ENCODE measurements at regions of chr2 and their contacts with region 1.

Region 1: DNA sequence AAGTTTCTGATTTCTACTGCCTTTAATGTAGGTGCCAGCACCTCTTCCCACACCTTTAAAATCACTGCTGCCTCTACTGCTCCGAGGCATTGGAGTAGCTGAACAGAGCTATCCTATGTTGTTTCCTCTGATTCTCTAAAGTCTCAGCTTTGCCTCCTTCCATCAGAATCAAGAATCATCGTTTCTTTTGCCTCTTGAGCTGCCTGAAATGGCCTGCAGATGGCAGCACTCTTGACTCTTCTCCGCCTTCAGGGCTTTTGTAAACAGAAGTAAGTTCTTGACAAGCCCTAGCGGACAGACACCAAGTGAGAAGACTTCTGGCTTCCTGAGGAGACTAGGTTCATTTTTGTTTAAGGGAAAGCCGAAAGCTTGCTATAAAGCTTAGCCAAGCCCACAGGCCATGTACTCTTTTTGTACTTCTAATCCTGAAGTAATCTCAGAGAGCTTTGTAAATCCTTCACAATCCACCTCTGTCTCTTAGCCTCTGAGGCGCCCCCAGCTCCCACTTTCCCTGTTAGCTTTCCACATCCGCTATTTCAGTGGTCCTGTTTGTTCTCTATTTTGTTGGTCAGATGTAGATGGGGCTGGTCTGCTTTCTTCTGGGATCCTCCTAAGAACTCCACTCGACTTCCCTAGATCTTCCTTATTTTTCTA is 48.4 kb downstream of the GTF3C3 start:
- DNase-seq: peak; percentile 84
- H3K4me3 ChIP-seq: peak overlapping the region; percentile 27; the same call in 1 of the 2 replicates
- H3K27ac ChIP-seq: no peak overlapping the region
- H3K4me1 ChIP-seq: no peaks in the 10 kb centered on the region
- H3K27me3 ChIP-seq: no peaks in the 10 kb centered on the region

Region 2: DNA sequence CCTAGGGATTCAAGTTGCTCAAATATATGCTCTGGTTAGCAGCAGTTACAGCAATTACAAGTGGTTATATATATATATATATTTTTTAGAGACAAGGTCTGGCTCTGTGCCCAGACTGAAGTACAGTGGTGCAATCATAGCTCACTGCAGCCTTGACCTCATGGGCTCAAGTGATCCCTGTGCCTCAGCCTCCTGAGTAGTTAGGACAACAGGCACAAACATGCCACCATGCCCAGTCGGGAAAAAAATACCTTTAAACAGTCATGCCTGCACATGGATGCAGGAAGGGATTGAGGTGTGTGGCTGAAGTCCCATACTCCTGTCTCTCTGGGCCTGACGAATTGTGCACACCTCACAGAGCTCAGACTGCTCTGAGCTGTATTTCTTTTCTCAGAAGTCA is 662.9 kb before region 1 on chr2:
- in situ Hi-C with region 1: loop called (anchors 10 kb)
- DNase-seq: peak; percentile 37
- H3K4me3 ChIP-seq: no peak overlapping the region
- H3K27ac ChIP-seq: no peak overlapping the region
- H3K4me1 ChIP-seq: no peaks in the 10 kb centered on the region
- H3K27me3 ChIP-seq: no peaks in the 10 kb centered on the region

Region 3: DNA sequence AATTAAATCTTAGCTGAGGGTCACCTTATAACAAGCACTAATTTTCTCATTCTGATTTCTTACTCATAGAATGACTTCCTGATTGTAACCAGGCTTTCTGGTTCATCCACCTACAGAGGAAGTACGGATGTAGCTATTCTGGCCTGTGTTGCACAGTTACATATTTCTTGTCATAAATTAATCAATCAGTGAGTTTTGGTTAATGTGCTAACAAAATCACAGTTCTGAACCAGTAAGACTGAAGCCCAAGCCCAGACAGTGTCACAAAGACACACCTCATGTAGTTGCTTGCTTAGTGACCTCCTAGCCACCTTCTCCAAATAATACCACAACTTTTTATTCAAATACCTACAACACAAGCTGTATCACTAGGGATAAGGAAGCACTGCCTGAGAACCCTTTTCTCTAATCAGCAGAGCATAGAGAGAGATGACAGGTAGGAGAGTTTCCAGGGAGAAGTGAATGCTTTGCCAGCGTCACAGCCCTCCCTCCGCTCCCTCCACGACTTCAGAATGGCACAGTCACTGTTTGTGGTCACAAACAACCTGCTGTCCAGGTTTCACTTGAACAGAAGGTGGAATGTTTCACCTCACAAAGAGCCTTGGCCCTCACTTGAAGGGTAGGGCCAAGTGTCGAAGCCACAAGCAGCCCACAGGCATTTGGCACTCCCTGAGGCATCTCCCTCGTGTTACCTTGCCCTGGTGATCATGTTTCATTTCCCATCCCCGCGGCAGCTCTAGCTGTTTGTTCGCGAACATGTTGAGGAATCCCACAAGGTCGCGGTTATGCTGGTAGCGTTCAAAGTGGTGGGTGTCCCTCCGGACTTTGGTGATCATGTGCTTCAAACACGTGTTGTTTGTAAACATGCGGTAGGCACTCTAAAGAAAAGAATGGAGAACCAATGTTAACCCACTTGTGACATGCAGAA is 459.0 kb before region 1 on chr2:
- in situ Hi-C with region 1: loop called (anchors 10 kb)
- DNase-seq: no peak
- H3K4me3 ChIP-seq: no peak overlapping the region
- H3K27ac ChIP-seq: no peak overlapping the region
- H3K4me1 ChIP-seq: peaks cover 31% of the 10 kb centered on the region
- H3K27me3 ChIP-seq: no peaks in the 10 kb centered on the region